Mammary epithelial cell (primary cell): ENCODE measurements at regions of chrX and their contacts with region 1.

Region 1: GRCh38 chrX:41923257-41923969 is at the start of gene CASK:
- DNase-seq: peak; percentile 88
- H3K4me3 ChIP-seq: peak within 1 kb of the TSS; percentile 65 to 79 (median 71)
- H3K27ac ChIP-seq: peak within 1 kb of the TSS; percentile 69
- H3K4me1 ChIP-seq: no peaks in the 10 kb centered on the region
- H3K27me3 ChIP-seq: peaks cover 1% of the 10 kb centered on the region
- CTCF ChIP-seq: no peak
- total RNA-seq, gene CASK: 54.0 to 57.9 TPM

Region 2: GRCh38 chrX:41796577-41796976 is 126.8 kb before region 1 on chrX:
- CTCF ChIA-PET with region 1: no interaction called
- dilution Hi-C with region 1: no loop called
- in situ Hi-C with region 1: no loop called
- intact Hi-C with region 1: loop called (anchors 2 kb)
- DNase-seq: no peak
- H3K4me3 ChIP-seq: no peak overlapping the region
- H3K27ac ChIP-seq: no peak overlapping the region
- H3K4me1 ChIP-seq: no peaks in the 10 kb centered on the region
- H3K27me3 ChIP-seq: peaks cover 2% of the 10 kb centered on the region
- CTCF ChIP-seq: no peak

Region 3: GRCh38 chrX:41906515-41907165 is 16.8 kb before region 1 on chrX:
- CTCF ChIA-PET with region 1: no interaction called
- dilution Hi-C with region 1: no loop called
- in situ Hi-C with region 1: no loop called
- intact Hi-C with region 1: loop called (anchors 2 kb)
- DNase-seq: peak; percentile 74
- H3K4me3 ChIP-seq: no peak overlapping the region
- H3K27ac ChIP-seq: peak overlapping the region; percentile 47
- H3K4me1 ChIP-seq: peaks cover 13% of the 10 kb centered on the region
- H3K27me3 ChIP-seq: no peaks in the 10 kb centered on the region
- CTCF ChIP-seq: peak in 1 of 2 donors; percentile 11

Region 4: GRCh38 chrX:42119076-42119475 is 195.7 kb after region 1 on chrX:
- CTCF ChIA-PET with region 1: no interaction called
- dilution Hi-C with region 1: no loop called
- in situ Hi-C with region 1: no loop called
- intact Hi-C with region 1: loop called (anchors 5 kb)
- DNase-seq: peak; percentile 96
- H3K4me3 ChIP-seq: no peak overlapping the region
- H3K27ac ChIP-seq: peak overlapping the region; percentile 96
- H3K4me1 ChIP-seq: peaks cover 17% of the 10 kb centered on the region
- H3K27me3 ChIP-seq: peaks cover 3% of the 10 kb centered on the region
- CTCF ChIP-seq: no peak

Region 5: DNA sequence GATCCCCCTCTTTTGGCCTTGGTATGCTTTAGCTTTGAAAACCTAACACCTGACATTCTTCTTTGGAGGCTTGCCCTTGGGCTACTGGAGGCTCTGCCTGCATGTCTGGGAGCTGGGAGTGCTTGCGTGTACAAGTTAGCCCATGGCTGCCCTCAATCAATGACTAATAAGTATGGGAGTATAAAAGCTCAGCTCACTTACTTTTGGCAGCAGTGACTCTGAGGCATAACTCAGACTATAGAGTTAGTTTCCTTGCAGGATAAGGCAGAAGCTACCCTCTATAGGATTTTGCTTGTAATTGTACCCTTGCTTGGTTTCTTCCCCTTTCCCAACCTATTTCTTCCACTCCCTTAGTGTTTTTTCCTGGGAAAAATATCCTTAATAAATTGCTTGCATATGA is 606.6 kb after region 1 on chrX:
- CTCF ChIA-PET with region 1: no interaction called
- dilution Hi-C with region 1: no loop called
- in situ Hi-C with region 1: no loop called
- intact Hi-C with region 1: loop called (anchors 1 kb)
- DNase-seq: peak; percentile 80
- H3K4me3 ChIP-seq: no peak overlapping the region
- H3K27ac ChIP-seq: no peak overlapping the region
- H3K4me1 ChIP-seq: peaks cover 3% of the 10 kb centered on the region
- H3K27me3 ChIP-seq: no peaks in the 10 kb centered on the region
- CTCF ChIP-seq: peak; percentile 24 to 54